Heart right ventricle (tissue), 16 donors: ENCODE measurements at regions of chr2 and their contacts with region 1.

Region 1: GRCh38 chr2:203814661-203815540 is 52.7 kb upstream of the CTLA4 start:
- DNase-seq: peak; percentile 48 to 51
- ATAC-seq: peak; percentile 59 to 92 (median 84)
- H3K4me3 ChIP-seq: peak overlapping the region in 3 of 10 donors; percentile 20 to 31 (median 28)
- H3K27ac ChIP-seq: peak overlapping the region in 8 of 10 donors; percentile 8 to 68 (median 38)
- H3K4me1 ChIP-seq: peaks cover 0 to 51% (median 16%) of the 10 kb centered on the region in 9 donors
- H3K27me3 ChIP-seq: no peaks in the 10 kb centered on the region
- CTCF ChIP-seq: peak; percentile 73 to 88 (median 83)

Region 2: DNA sequence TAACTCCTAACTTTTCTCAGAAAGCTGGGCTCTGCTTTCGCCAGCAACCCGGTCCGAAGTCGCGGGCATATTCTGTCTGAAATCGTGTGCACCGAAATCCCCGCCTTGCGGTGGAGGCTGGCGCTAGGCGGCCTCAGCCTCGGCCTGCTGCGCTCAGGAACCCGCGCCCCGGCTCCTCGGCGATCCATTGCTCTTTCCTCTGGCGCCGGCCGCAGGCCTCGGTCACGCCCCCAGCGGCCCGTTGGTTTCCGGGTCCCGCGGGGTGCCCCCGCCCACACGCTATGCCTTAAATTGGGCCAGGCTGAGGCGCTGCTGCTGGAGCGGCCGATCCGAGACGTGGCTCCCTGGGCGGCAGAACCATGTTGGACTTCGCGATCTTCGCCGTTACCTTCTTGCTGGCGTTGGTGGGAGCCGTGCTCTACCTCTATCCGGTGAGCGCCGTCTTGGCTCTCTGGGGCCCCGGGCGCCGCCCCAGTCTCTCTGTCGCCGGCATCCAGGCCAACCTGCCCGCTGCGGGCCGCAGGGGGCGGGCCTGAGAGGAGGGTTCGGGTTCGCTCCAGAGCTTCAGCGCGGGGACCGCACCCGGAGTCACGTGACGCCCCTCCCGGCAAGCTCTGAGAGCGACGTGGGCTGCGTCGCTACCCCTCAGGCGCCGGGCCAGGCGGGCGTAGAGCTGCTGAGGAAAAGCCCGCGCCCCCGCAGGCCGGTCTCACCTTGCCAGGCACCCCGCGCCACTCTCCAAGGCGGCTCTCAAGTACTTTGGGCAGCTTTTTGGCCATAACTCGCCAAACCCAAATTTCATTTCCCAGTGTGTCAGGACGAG is 576.0 kb before region 1 on chr2 and contains the start of gene CYP20A1:
- intact Hi-C with region 1: loop called in 2 of 10 experiments (anchors 10 kb)
- DNase-seq: peak; percentile 96 to 97
- ATAC-seq: peak; percentile 97 to 99 (median 98)
- H3K4me3 ChIP-seq: peak within 1 kb of the TSS; percentile 51 to 95 (median 77)
- H3K27ac ChIP-seq: peak within 1 kb of the TSS; percentile 67 to 98 (median 96)
- H3K4me1 ChIP-seq: peaks cover 0 to 27% (median 16%) of the 10 kb centered on the region in 9 donors
- H3K27me3 ChIP-seq: no peaks in the 10 kb centered on the region
- CTCF ChIP-seq: peak in 7 of 9 donors; percentile 24 to 63 (median 48)
- total RNA-seq, gene CYP20A1: 8.9 to 15.4 (median 10.9) TPM

Region 3: GRCh38 chr2:203484266-203485112 is 330.4 kb before region 1 on chr2:
- intact Hi-C with region 1: loop called in 9 of 10 experiments (anchors 1 to 10 kb)
- DNase-seq: peak in 1 of 2 donors; percentile 19
- ATAC-seq: peak; percentile 71 to 91 (median 82)
- H3K4me3 ChIP-seq: no peak overlapping the region
- H3K27ac ChIP-seq: no peak overlapping the region
- H3K4me1 ChIP-seq: peaks cover 0 to 6% (median 0%) of the 10 kb centered on the region in 9 donors
- H3K27me3 ChIP-seq: no peaks in the 10 kb centered on the region
- CTCF ChIP-seq: peak; percentile 48 to 79 (median 70)

Region 4: GRCh38 chr2:203689426-203690116 is 125.3 kb before region 1 on chr2:
- intact Hi-C with region 1: loop called in 1 of 10 experiments (anchors 5 kb)
- DNase-seq: no peak
- ATAC-seq: no peak
- H3K4me3 ChIP-seq: no peak overlapping the region
- H3K27ac ChIP-seq: peak overlapping the region in 9 of 10 donors; percentile 11 to 91 (median 56)
- H3K4me1 ChIP-seq: peaks cover 27 to 98% (median 88%) of the 10 kb centered on the region in 9 donors
- H3K27me3 ChIP-seq: no peaks in the 10 kb centered on the region
- CTCF ChIP-seq: no peak

Region 5: GRCh38 chr2:204108330-204108751 is 293.4 kb after region 1 on chr2:
- intact Hi-C with region 1: no loop called
- DNase-seq: peak in 1 of 2 donors; percentile 16
- ATAC-seq: peak; percentile 44 to 81 (median 74)
- H3K4me3 ChIP-seq: no peak overlapping the region
- H3K27ac ChIP-seq: peak overlapping the region in 6 of 10 donors; percentile 0 to 69 (median 38)
- H3K4me1 ChIP-seq: peaks cover 0 to 40% (median 34%) of the 10 kb centered on the region in 9 donors
- H3K27me3 ChIP-seq: no peaks in the 10 kb centered on the region
- CTCF ChIP-seq: peak; percentile 27 to 74 (median 67)

Region 6: GRCh38 chr2:204170411-204170810 is 355.5 kb after region 1 on chr2:
- intact Hi-C with region 1: no loop called
- DNase-seq: no peak
- ATAC-seq: peak in 2 of 8 donors; percentile 57 to 62
- H3K4me3 ChIP-seq: no peak overlapping the region
- H3K27ac ChIP-seq: no peak overlapping the region
- H3K4me1 ChIP-seq: peaks cover 0 to 14% (median 4%) of the 10 kb centered on the region in 9 donors
- H3K27me3 ChIP-seq: peaks cover 0 to 5% (median 0%) of the 10 kb centered on the region in 7 donors
- CTCF ChIP-seq: no peak